Activated B cell treated with CpG ODN at 0.5 μM for 24 hours (primary cell): ENCODE measurements at regions of chr12 and their contacts with region 1.

Region 1: DNA sequence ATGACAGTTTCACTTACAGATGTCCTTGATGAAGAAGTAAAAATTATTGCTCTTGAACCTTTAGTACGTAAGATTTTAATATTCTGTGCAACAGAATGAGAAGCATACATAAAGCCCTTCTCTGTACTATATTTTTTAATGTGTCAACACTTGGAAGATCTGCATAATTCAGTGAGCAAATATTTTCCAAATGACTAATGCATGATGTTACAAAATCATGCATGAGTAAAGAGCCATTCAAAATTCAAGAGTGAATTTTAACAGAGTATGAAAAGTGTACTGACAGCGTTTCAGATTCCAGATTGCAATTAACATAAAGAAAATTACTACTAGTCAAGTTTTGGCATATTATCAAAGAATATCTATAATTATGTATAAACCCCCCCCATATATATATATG is 101.4 kb upstream of the BBS10 start:
- DNase-seq: no peak
- ATAC-seq: no peak
- H3K4me3 Mint-ChIP-seq: no peak overlapping the region
- H3K27ac Mint-ChIP-seq: no peak overlapping the region
- H3K4me1 Mint-ChIP-seq: peaks cover 14% of the 10 kb centered on the region
- H3K27me3 Mint-ChIP-seq: no peaks in the 10 kb centered on the region
- CTCF ChIP-seq: no peak

Region 2: DNA sequence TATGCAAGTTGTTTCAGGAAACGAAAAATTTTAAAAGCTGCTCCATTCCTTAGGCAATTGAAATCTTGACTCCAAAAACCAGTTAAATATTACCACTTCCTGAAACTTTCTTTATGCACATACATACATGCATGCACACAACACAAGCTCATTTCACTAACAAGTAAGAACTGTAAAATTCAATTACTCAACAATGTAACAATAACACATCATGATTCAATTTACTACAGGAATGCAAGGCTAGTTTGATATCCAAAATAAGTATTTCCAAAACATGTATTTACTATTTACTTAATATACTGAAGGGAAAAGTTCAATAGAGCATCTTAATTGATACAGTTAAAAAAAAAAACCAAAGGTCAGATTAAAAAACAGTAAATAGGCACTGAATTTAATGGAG is 384.7 kb before region 1 on chr12:
- CTCF ChIA-PET with region 1: no interaction called
- POLR2A ChIA-PET with region 1: no interaction called
- intact Hi-C with region 1: no loop called
- DNase-seq: no peak
- ATAC-seq: no peak
- H3K4me3 Mint-ChIP-seq: no peak overlapping the region
- H3K27ac Mint-ChIP-seq: no peak overlapping the region
- H3K4me1 Mint-ChIP-seq: peaks cover 16% of the 10 kb centered on the region
- H3K27me3 Mint-ChIP-seq: no peaks in the 10 kb centered on the region
- CTCF ChIP-seq: no peak

Region 3: GRCh38 chr12:76402259-76402658 is 47.3 kb before region 1 on chr12:
- CTCF ChIA-PET with region 1: no interaction called
- POLR2A ChIA-PET with region 1: no interaction called
- intact Hi-C with region 1: loop called (anchors 5 kb)
- DNase-seq: no peak
- ATAC-seq: no peak
- H3K4me3 Mint-ChIP-seq: no peak overlapping the region
- H3K27ac Mint-ChIP-seq: no peak overlapping the region
- H3K4me1 Mint-ChIP-seq: no peaks in the 10 kb centered on the region
- H3K27me3 Mint-ChIP-seq: no peaks in the 10 kb centered on the region
- CTCF ChIP-seq: no peak